CD8-positive, alpha-beta memory T cell (primary cell): ENCODE measurements at regions of chr2 and their contacts with region 1.

Region 1: DNA sequence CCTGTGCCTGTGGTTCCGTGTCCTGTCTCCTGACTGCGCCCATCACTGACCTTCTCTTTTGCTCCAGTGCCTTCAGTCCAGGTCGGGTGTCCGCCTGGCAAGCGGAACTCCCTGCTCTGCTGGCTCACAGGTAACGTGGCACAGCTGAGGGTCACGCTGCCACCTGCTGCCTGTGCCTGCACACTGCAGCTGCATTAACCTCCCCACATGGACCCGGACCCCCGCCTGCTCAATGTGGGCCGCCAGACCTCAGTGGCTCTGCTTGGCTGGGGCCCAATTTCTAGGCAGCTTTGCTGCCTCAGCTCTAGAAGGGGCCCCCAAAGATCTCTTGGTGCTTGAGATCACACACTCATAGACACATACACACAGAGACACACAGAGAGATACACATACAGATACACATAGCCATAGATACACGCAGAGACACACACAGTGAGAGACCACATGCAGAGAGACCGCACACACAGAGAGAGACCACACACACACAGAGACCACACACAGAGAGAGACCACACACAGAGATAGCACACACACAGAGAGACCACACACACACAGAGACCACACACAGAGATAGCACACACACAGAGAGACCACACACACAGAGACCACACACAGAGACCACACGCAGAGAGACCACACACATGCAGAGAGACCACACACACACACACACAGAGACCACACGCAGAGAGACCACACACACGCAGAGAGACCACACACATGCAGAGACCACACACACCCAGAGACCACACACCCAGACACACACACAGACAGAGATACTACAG is 14.9 kb upstream of the CNNM3 start:
- DNase-seq: peak; percentile 54 to 79 (median 59)
- H3K4me3 ChIP-seq: no peak overlapping the region
- H3K4me3 Mint-ChIP-seq: no peak overlapping the region
- H3K27ac ChIP-seq: no peak overlapping the region
- H3K27ac Mint-ChIP-seq: no peak overlapping the region
- H3K4me1 ChIP-seq: peaks cover 27% of the 10 kb centered on the region
- H3K4me1 Mint-ChIP-seq: peaks cover 3 to 10% (median 7%) of the 10 kb centered on the region in 3 donors
- H3K27me3 ChIP-seq: no peaks in the 10 kb centered on the region
- H3K27me3 Mint-ChIP-seq: no peaks in the 10 kb centered on the region

Region 2: GRCh38 chr2:96594691-96595152 is 206.5 kb before region 1 on chr2:
- CTCF ChIA-PET with region 1: interaction called, 10 read pairs
- POLR2A ChIA-PET with region 1: no interaction called
- DNase-seq: peak in 2 of 5 donors; percentile 31 to 37
- H3K4me3 ChIP-seq: peak overlapping the region; percentile 15
- H3K4me3 Mint-ChIP-seq: peak overlapping the region in 6 of 7 donors; percentile 46 to 68 (median 62)
- H3K27ac ChIP-seq: no peak overlapping the region
- H3K27ac Mint-ChIP-seq: peak overlapping the region; percentile 78 to 96 (median 86)
- H3K4me1 ChIP-seq: peaks cover 27% of the 10 kb centered on the region
- H3K4me1 Mint-ChIP-seq: peaks cover 37 to 53% (median 51%) of the 10 kb centered on the region in 3 donors
- H3K27me3 ChIP-seq: no peaks in the 10 kb centered on the region
- H3K27me3 Mint-ChIP-seq: no peaks in the 10 kb centered on the region

Region 3: DNA sequence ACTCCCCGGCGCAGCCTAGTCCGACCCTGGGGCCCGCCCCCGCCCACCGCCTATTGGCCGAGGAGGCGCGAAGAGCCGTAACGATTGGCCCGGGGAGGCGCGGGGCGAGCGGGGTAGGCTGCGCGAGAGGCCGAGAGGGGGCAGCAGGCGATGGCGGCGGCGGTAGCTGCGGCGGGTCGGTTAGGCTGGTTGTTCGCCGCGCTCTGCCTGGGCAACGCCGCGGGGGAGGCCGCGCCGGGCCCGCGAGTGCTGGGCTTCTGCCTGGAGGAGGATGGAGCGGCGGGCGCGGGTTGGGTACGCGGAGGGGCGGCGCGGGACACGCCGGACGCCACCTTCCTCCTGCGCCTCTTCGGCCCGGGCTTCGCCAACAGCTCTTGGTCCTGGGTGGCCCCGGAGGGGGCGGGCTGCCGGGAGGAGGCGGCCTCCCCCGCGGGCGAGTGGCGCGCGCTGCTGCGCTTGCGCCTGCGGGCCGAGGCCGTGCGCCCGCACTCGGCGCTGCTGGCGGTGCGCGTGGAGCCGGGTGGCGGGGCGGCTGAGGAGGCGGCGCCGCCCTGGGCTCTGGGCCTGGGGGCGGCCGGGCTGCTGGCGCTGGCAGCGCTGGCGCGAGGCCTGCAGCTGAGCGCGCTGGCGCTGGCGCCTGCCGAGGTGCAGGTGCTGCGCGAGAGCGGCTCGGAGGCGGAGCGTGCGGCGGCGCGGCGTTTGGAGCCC is 15.1 kb after region 1 on chr2 and contains the start of gene CNNM3:
- CTCF ChIA-PET with region 1: interaction called, 16 read pairs
- POLR2A ChIA-PET with region 1: interaction called, 40 read pairs
- DNase-seq: peak; percentile 91 to 96 (median 94)
- H3K4me3 ChIP-seq: peak within 1 kb of the TSS; percentile 84
- H3K4me3 Mint-ChIP-seq: peak within 1 kb of the TSS; percentile 92 to 97 (median 96)
- H3K27ac ChIP-seq: peak within 1 kb of the TSS; percentile 69
- H3K27ac Mint-ChIP-seq: peak within 1 kb of the TSS; percentile 56 to 96 (median 94)
- H3K4me1 ChIP-seq: peaks cover 48% of the 10 kb centered on the region
- H3K4me1 Mint-ChIP-seq: peaks cover 60 to 76% (median 68%) of the 10 kb centered on the region in 3 donors
- H3K27me3 ChIP-seq: no peaks in the 10 kb centered on the region
- H3K27me3 Mint-ChIP-seq: peaks cover 0 to 1% of the 10 kb centered on the region in 2 donors
- total RNA-seq, gene CNNM3: 32.6 to 36.6 TPM